AG04450 (cell line): ENCODE measurements at regions of chr16 and their contacts with region 1.

Region 1: DNA sequence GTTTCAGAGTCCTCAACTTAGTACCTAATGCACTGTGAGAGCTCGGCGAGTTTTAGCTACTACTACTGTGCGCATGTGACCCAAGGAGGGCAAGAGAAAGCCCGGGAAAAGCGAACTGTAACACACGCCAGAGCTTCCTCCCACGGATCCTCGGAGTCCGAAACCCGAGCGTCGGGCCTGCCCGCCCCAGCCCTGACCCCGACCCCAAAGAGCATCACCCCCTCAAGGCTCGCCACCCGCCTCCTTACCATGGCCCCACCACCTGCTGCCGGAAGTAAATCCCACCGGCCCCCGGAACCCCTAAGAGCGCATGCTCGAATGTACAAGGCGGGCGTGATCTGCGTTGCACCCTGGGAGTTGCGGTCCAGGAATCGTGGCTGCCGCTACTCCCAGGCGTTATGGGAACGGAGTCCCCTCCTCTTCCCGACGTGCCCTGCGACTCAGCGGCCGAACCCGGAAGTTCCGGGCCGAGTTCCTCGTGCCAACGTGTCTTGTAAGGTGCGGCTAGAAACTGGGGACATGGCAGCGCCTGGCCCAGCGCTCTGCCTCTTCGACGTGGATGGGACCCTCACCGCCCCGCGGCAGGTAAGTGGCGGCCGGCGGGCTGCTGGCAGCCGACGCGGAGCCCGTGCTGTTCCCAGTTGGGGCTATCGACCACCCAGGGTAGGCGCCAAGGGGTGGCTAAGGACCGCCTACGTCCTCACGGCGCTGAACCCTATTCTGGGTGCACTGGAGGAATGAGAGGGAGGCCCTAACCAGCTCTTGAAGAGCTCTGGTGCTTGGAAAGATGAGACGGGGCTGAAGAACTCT is at the starts of genes PMM2 and TMEM186:
- DNase-seq: peak; percentile 89
- H3K4me3 ChIP-seq: peak within 1 kb of the TSS; percentile 99
- H3K27ac ChIP-seq: peak within 1 kb of the TSS; percentile 86
- H3K27me3 ChIP-seq: no peaks in the 10 kb centered on the region
- CTCF ChIP-seq: no peak
- polyA plus RNA-seq, gene PMM2: 37.0 TPM in 2 replicates
- polyA plus RNA-seq, gene TMEM186: 7.2 and 7.7 TPM in 2 replicates

Region 2: GRCh38 chr16:8567750-8568617 is 229.6 kb before region 1 on chr16:
- CTCF ChIA-PET with region 1: interaction called, 30 read pairs
- POLR2A ChIA-PET with region 1: no interaction called
- DNase-seq: peak; percentile 74
- H3K4me3 ChIP-seq: no peak overlapping the region
- H3K27ac ChIP-seq: peak overlapping the region; percentile 21
- H3K27me3 ChIP-seq: no peaks in the 10 kb centered on the region
- CTCF ChIP-seq: peak; percentile 99

Region 3: DNA sequence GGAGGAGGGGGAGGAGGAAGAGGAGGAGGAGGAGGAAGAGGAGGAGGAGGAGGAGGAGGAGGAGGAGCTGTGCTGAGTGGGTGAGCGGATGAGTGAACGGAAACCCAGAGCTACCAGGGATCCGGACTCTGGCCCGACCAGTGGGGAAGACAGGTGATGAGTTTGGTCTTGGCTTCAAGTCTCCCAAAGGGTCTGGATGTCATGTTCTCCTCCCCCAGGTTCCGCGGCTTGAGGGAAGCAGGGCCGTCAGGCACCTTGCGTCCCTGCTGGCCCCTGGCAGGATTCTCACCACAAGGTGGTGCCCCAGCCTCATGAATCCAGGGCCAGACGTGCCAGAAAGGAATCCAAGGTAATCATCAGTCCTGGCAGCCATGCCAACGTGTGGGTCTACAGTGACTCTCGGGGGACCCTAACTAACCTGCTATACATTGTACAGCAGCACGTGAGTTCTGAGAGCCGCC is 136.7 kb before region 1 on chr16:
- CTCF ChIA-PET with region 1: interaction called, 43 read pairs
- POLR2A ChIA-PET with region 1: no interaction called
- DNase-seq: peak; percentile 24
- H3K4me3 ChIP-seq: no peak overlapping the region
- H3K27ac ChIP-seq: no peak overlapping the region
- H3K27me3 ChIP-seq: peaks cover 7% of the 10 kb centered on the region
- CTCF ChIP-seq: peak; percentile 83

Region 4: DNA sequence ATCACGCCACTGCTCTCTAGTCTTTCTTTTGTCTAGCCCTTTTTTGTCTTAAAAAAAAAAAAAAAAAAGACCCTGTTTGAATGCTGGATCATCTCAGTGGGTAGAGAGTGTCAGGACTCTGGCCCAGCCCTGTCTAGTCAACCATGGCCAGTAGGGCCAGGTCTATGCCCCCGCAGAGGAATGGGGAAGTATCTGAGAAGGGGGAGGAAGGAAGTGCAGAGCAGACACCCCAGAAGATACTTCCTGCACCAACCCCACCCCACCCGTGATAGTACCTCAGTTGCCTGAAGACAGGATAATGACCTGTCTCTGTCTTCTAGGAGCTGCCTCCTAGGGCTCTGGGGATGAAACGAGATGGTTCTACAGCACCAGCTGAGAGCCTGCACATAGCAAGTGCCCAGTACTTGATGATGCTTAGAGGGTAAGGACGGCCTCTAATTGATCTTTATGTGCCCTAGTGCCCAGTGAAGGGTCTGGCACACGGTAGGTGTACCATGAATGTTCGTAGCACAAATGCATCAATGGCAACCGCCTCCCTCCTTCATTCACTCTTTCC is 67.7 kb before region 1 on chr16:
- CTCF ChIA-PET with region 1: no interaction called
- POLR2A ChIA-PET with region 1: no interaction called
- DNase-seq: no peak
- H3K4me3 ChIP-seq: no peak overlapping the region
- H3K27ac ChIP-seq: no peak overlapping the region
- H3K27me3 ChIP-seq: peaks cover 6% of the 10 kb centered on the region
- CTCF ChIP-seq: no peak

Region 5: GRCh38 chr16:8808613-8809353 is 11.2 kb after region 1 on chr16:
- CTCF ChIA-PET with region 1: interaction called, 3 read pairs
- POLR2A ChIA-PET with region 1: interaction called, 13 read pairs
- DNase-seq: no peak
- H3K4me3 ChIP-seq: no peak overlapping the region
- H3K27ac ChIP-seq: no peak overlapping the region
- H3K27me3 ChIP-seq: no peaks in the 10 kb centered on the region
- CTCF ChIP-seq: no peak